ENCODE measurements at regions of chr14 and their contacts with region 1.

Region 1: GRCh38 chr14:52552063-52552988 is at the starts of genes GPR137C and TXNDC16:
- DNase-seq: peak; percentile 100
- H3K4me3 Mint-ChIP-seq: peak within 1 kb of the TSS; percentile 93
- H3K27ac Mint-ChIP-seq: peak within 1 kb of the TSS; percentile 77
- H3K4me1 Mint-ChIP-seq: peaks cover 29% of the 10 kb centered on the region
- H3K27me3 Mint-ChIP-seq: peaks cover 29% of the 10 kb centered on the region
- total RNA-seq, gene GPR137C: 0.07 and 0.24 TPM in 2 replicates
- total RNA-seq, gene TXNDC16: 4.7 and 6.2 TPM in 2 replicates

Region 2: GRCh38 chr14:51094901-51095853 is 1457.1 kb before region 1 on chr14 and contains the start of gene TRIM9:
- intact Hi-C with region 1: loop called (anchors 10 kb)
- DNase-seq: peak; percentile 97
- H3K4me3 Mint-ChIP-seq: peak within 1 kb of the TSS; percentile 91
- H3K27ac Mint-ChIP-seq: peak within 1 kb of the TSS; percentile 51
- H3K4me1 Mint-ChIP-seq: peaks cover 15% of the 10 kb centered on the region
- H3K27me3 Mint-ChIP-seq: peaks cover 55% of the 10 kb centered on the region
- total RNA-seq, gene TRIM9: 0.47 and 0.52 TPM in 2 replicates

Region 3: GRCh38 chr14:51989293-51990234 is 562.8 kb before region 1 on chr14 and contains the start of gene RTRAF:
- intact Hi-C with region 1: loop called (anchors 2 kb)
- DNase-seq: peak; percentile 98
- H3K4me3 Mint-ChIP-seq: peak within 1 kb of the TSS; percentile 93
- H3K27ac Mint-ChIP-seq: peak within 1 kb of the TSS; percentile 96
- H3K4me1 Mint-ChIP-seq: peaks cover 18% of the 10 kb centered on the region
- H3K27me3 Mint-ChIP-seq: no peaks in the 10 kb centered on the region
- total RNA-seq, gene RTRAF: 226 and 229 TPM in 2 replicates

Region 4: GRCh38 chr14:52351233-52352060 is 200.9 kb before region 1 on chr14:
- intact Hi-C with region 1: loop called (anchors 1 kb)
- DNase-seq: peak; percentile 82
- H3K4me3 Mint-ChIP-seq: peak overlapping the region; percentile 81
- H3K27ac Mint-ChIP-seq: peak overlapping the region; percentile 99
- H3K4me1 Mint-ChIP-seq: peaks cover 64% of the 10 kb centered on the region
- H3K27me3 Mint-ChIP-seq: no peaks in the 10 kb centered on the region

Region 5: DNA sequence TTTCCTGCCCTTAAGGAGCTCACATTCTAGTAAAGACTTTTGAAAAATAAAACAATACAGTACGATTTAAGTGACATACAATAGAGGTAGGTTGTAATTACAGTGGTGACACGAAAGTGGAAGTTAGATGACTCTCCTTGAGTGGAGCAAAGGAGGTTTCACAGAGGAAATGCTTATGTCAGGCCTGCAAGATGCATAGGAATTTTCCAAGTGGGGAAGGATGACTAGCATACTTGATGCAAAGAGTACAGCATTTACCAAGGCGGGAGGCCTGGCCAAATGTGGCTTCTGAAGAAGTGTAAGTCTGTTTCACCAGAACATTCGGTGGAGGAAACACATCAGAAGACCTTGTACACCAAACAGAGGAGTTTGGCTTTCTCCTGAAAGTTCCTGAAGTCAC is 87.8 kb after region 1 on chr14:
- intact Hi-C with region 1: loop called (anchors 5 kb)
- DNase-seq: no peak
- H3K4me3 Mint-ChIP-seq: no peak overlapping the region
- H3K27ac Mint-ChIP-seq: peak overlapping the region; percentile 76
- H3K4me1 Mint-ChIP-seq: peaks cover 10% of the 10 kb centered on the region
- H3K27me3 Mint-ChIP-seq: peaks cover 5% of the 10 kb centered on the region

Region 6: GRCh38 chr14:52706724-52707706 is 154.7 kb after region 1 on chr14 and contains the start of gene PSMC6:
- intact Hi-C with region 1: loop called (anchors 1 kb)
- DNase-seq: peak; percentile 96
- H3K4me3 Mint-ChIP-seq: peak within 1 kb of the TSS; percentile 99
- H3K27ac Mint-ChIP-seq: peak within 1 kb of the TSS; percentile 98
- H3K4me1 Mint-ChIP-seq: peaks cover 34% of the 10 kb centered on the region
- H3K27me3 Mint-ChIP-seq: no peaks in the 10 kb centered on the region
- total RNA-seq, gene PSMC6: 142 and 143 TPM in 2 replicates

Region 7: DNA sequence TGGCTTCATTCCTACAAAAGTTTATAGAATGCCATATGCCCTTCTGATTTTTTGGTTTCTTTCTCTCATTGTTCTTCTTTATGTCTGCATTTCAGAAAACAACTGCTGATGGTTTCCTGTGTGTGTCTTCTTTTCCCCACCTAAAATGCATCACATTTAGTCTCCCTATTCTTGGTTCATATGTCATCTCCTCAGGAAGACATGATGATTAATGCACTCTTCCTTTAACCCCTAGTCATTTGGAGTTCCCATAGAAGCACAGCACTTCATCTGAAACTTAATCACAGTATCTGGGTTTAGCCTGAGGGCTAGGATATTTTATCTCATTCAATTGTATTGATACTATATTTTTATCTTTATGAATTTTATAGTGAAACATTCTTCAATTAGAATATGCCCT is 217.6 kb after region 1 on chr14:
- intact Hi-C with region 1: no loop called
- DNase-seq: no peak
- H3K4me3 Mint-ChIP-seq: no peak overlapping the region
- H3K27ac Mint-ChIP-seq: peak overlapping the region; percentile 59
- H3K4me1 Mint-ChIP-seq: peaks cover 10% of the 10 kb centered on the region
- H3K27me3 Mint-ChIP-seq: no peaks in the 10 kb centered on the region

Region 8: DNA sequence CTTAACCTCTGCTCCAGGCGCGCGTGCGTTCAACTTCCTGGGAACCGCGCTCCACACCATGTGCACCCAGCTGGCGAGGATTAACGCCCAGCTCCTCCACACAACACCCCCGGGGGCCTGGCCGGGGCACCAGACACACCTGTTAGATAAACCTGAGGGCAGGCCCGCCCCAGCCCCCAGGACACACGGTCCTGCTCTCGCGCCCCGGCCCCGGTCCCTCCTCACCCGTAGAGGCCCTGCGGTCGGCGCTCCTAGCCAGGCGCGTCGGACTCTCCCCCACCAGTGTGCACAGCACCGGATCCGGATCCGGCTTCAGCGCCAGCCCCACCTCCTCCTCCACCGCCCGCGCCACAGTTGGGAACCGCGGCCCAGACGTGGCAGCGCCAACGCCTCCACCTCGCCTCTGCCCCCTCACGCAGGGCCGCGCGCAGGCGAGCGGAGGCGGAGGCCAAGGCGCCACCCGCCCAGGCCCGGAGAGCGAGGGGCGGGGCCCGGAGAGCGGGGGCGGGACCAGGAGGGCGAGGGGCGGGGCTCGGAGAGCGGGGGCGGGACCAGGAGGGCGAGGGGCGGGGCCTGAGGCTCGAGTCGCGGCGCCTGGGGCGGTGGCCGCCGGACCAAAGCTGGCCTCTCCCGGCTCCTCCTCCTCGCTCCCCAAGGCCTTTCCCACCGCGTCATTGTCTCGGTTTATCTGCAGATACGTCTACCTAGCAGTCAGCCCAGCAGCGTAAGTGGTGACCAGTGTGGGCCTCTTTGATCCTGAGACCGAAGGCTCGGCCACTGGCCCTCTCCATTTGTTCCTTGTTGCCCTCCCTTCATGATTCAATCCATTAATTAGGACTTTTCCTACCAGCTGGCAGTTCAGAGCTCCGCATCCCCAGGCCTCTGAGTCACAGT is 239.1 kb after region 1 on chr14 and contains the start of gene GNPNAT1:
- intact Hi-C with region 1: loop called (anchors 1 kb)
- DNase-seq: peak; percentile 96
- H3K4me3 Mint-ChIP-seq: peak within 1 kb of the TSS; percentile 97
- H3K27ac Mint-ChIP-seq: peak within 1 kb of the TSS; percentile 83
- H3K4me1 Mint-ChIP-seq: peaks cover 32% of the 10 kb centered on the region
- H3K27me3 Mint-ChIP-seq: no peaks in the 10 kb centered on the region
- total RNA-seq, gene GNPNAT1: 30.6 and 32.4 TPM in 2 replicates

Region 9: GRCh38 chr14:53180268-53181221 is 628.2 kb after region 1 on chr14:
- intact Hi-C with region 1: no loop called
- DNase-seq: peak; percentile 82
- H3K4me3 Mint-ChIP-seq: peak overlapping the region; percentile 26
- H3K27ac Mint-ChIP-seq: peak overlapping the region; percentile 74
- H3K4me1 Mint-ChIP-seq: peaks cover 36% of the 10 kb centered on the region
- H3K27me3 Mint-ChIP-seq: peaks cover 1% of the 10 kb centered on the region

Measured in activated CD4-positive, alpha-beta T cell treated with anti-CD3 and anti-CD28 coated beads, Interleukin-2, amount 10 ng/mL, durations not matched to agents 24 days and 14 days (primary cell).